Sigmoid colon (tissue), 7 donors: ENCODE measurements at regions of chrX and their contacts with region 1.

Region 1: DNA sequence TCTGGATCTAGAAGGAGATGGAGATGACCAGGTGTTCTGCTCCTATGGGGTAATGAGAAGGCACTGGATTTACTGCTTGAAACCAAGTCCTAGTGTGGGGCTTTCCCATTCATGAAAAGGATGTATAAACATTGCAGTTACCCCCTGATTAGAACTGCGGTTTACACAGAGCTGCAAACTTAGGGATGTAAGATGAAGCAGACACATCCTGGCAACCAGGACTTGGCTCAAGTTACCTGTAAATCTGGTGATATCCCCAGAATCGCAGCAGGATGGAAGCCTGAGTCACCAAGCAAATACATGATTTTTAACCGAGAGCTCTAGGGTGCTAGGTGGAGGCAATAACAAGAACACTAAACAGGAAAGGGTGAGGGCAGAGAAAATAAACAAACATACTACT is 178.6 kb upstream of the MAMLD1 start:
- DNase-seq: no peak
- H3K4me3 ChIP-seq: no peak overlapping the region
- H3K27ac ChIP-seq: no peak overlapping the region
- H3K4me1 ChIP-seq: no peaks in the 10 kb centered on the region
- H3K27me3 ChIP-seq: no peaks in the 10 kb centered on the region
- CTCF ChIP-seq: no peak
- EP300 ChIP-seq: no peak
- POLR2A ChIP-seq: no peak

Region 2: DNA sequence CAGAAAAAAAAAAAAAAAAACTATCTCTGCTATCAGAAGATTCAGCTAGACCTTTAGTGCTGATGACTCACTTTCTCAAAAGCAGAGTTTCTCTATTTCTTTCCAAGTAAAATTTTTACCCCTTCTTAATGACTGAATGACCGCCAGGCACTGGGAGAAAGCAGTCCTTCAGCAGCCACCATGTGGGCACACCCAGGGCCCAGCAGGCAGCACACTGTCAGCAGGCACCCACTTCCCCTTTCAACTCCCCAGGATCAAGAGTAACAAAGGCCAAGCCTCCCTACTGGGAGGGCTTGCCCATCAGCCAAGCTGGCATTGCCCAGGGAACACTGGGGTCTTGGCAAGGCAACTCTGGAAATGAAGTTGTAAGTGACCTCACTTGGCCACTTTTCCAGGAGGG is 23.3 kb before region 1 on chrX:
- intact Hi-C with region 1: loop called (anchors 2 kb)
- DNase-seq: no peak
- H3K4me3 ChIP-seq: no peak overlapping the region
- H3K27ac ChIP-seq: no peak overlapping the region
- H3K4me1 ChIP-seq: no peaks in the 10 kb centered on the region
- H3K27me3 ChIP-seq: no peaks in the 10 kb centered on the region
- CTCF ChIP-seq: no peak
- EP300 ChIP-seq: no peak
- POLR2A ChIP-seq: no peak